CD8-positive, alpha-beta T cell (primary cell): ENCODE measurements at regions of chr19 and their contacts with region 1.

Region 1: GRCh38 chr19:17859533-17860330 is at the start of gene RPL18A:
- DNase-seq: peak; percentile 97 to 100 (median 99)
- ATAC-seq: peak; percentile 96
- H3K4me3 ChIP-seq: peak within 1 kb of the TSS; percentile 82 to 94
- H3K4me3 Mint-ChIP-seq: peak within 1 kb of the TSS; percentile 98
- H3K27ac ChIP-seq: peak within 1 kb of the TSS; percentile 64 to 73
- H3K27ac Mint-ChIP-seq: peak within 1 kb of the TSS; percentile 97
- H3K4me1 ChIP-seq: peaks cover 23% of the 10 kb centered on the region
- H3K4me1 Mint-ChIP-seq: peaks cover 39% of the 10 kb centered on the region
- H3K27me3 ChIP-seq: no peaks in the 10 kb centered on the region
- H3K27me3 Mint-ChIP-seq: no peaks in the 10 kb centered on the region
- CTCF ChIP-seq: peak; percentile 75
- total RNA-seq, gene RPL18A: 3,915 to 3,952 TPM

Region 2: DNA sequence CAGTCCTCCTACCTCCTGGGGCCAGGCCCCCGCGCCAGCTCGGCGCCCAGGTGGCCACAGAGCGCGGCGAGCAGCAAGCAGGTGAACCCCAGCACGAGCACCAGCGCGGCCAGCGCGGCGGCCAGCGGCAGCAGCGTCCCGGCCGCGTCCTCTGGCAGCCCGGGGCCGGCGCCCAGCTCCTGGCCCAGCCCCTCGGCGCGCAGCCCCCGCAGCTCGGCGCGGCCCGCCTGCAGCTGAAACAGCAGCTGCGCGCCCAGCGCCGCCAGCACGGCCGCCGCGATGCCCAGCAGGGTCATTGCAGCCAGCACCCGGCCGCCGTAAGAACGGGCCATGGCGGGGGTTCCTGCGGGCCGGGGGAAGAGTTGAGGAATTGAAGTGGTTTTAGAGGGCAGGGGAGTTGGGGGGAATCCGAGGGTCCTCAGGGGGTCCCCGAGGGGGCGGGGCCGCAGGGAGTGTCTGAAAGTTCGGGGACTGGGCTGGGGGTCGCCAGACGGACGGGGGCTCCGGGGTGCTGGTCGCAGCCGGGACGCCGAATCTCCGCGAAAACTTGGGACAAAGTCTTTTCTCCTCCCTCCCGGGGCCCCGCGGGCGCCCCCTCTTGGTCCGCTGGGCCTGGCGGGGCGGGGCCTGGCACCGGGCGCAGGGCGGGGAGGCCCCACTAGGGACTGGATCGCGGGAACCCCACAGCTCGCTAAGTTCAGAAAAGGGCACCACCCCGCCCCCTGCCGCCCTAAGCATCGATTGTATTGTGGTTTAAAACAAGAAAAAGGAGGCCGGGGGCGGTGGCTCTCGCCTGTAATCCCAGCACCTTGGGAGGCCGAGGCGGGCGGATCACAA is 411.4 kb before region 1 on chr19 and contains the start of gene TMEM221:
- CTCF ChIA-PET with region 1: no interaction called
- POLR2A ChIA-PET with region 1: no interaction called
- intact Hi-C with region 1: loop called in 1 of 2 experiments (anchors 2 kb)
- DNase-seq: peak; percentile 16 to 76 (median 59)
- ATAC-seq: peak; percentile 81
- H3K4me3 ChIP-seq: peak within 1 kb of the TSS in 1 of 2 experiments; percentile 15
- H3K4me3 Mint-ChIP-seq: peak within 1 kb of the TSS; percentile 53
- H3K27ac ChIP-seq: no peak within 1 kb of the TSS
- H3K27ac Mint-ChIP-seq: no peak within 1 kb of the TSS
- H3K4me1 ChIP-seq: no peaks in the 10 kb centered on the region
- H3K4me1 Mint-ChIP-seq: peaks cover 11% of the 10 kb centered on the region
- H3K27me3 ChIP-seq: peaks cover 3 to 20% of the 10 kb centered on the region in 2 experiments
- H3K27me3 Mint-ChIP-seq: peaks cover 17% of the 10 kb centered on the region
- CTCF ChIP-seq: peak; percentile 61
- total RNA-seq, gene TMEM221: not detected

Region 3: GRCh38 chr19:17703824-17704463 is 155.8 kb before region 1 on chr19:
- CTCF ChIA-PET with region 1: interaction called, 107 read pairs
- POLR2A ChIA-PET with region 1: interaction called, 8 read pairs
- intact Hi-C with region 1: loop called (anchors 1 kb)
- DNase-seq: peak; percentile 52 to 83 (median 73)
- ATAC-seq: peak; percentile 99
- H3K4me3 ChIP-seq: no peak overlapping the region
- H3K4me3 Mint-ChIP-seq: no peak overlapping the region
- H3K27ac ChIP-seq: no peak overlapping the region
- H3K27ac Mint-ChIP-seq: no peak overlapping the region
- H3K4me1 ChIP-seq: no peaks in the 10 kb centered on the region
- H3K4me1 Mint-ChIP-seq: no peaks in the 10 kb centered on the region
- H3K27me3 ChIP-seq: no peaks in the 10 kb centered on the region
- H3K27me3 Mint-ChIP-seq: peaks cover 9% of the 10 kb centered on the region
- CTCF ChIP-seq: peak; percentile 89

Region 4: GRCh38 chr19:17847538-17848366 is 12.0 kb before region 1 on chr19 and contains the start of gene JAK3:
- CTCF ChIA-PET with region 1: interaction called, 19 read pairs
- POLR2A ChIA-PET with region 1: interaction called, 21 read pairs
- intact Hi-C with region 1: loop called in 1 of 2 experiments (anchors 1 kb)
- DNase-seq: peak; percentile 57 to 95 (median 86)
- ATAC-seq: peak; percentile 82
- H3K4me3 ChIP-seq: peak within 1 kb of the TSS; percentile 66
- H3K4me3 Mint-ChIP-seq: peak within 1 kb of the TSS; percentile 92
- H3K27ac ChIP-seq: peak within 1 kb of the TSS; percentile 84 to 85
- H3K27ac Mint-ChIP-seq: peak within 1 kb of the TSS; percentile 95
- H3K4me1 ChIP-seq: peaks cover 71% of the 10 kb centered on the region
- H3K4me1 Mint-ChIP-seq: peaks cover 69% of the 10 kb centered on the region
- H3K27me3 ChIP-seq: no peaks in the 10 kb centered on the region
- H3K27me3 Mint-ChIP-seq: no peaks in the 10 kb centered on the region
- CTCF ChIP-seq: no peak
- total RNA-seq, gene JAK3: 113 to 119 TPM

Region 5: DNA sequence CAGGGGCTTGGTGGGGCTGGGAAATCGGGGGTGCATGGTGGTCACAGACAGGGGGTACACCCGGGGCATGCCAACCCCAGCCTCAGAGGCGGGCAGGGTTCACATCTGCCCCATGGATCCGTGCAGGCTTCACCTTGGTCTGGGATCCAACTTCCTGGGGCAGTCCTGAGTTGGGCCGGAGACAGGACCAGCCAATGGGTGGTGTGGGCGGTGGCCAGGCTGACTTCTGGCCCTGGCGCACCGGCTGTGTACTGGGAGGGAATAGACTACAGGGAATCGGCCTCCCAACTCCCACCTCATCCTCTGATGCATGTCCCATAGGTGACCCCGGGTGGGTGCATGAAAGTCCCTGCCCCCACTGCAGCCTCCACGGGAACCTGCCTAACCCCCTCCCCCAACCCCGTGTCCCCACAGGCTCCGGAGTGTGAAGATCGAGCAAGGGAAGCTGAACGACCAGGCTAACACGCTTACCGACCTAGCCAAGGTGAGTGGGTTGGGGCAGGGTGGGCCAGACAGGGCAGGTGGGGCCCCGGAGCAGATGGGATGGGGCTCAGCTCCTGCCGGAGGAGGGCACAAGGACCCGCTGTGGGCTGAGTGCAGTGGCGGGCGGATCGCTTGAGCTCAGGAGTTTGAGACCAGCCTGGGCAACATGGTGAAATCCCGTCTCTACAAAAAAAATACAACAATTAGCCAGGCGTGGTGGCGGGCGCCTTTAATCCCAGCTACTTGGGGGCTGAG is 133.5 kb after region 1 on chr19:
- CTCF ChIA-PET with region 1: interaction called, 16 read pairs
- POLR2A ChIA-PET with region 1: interaction called, 4 read pairs
- intact Hi-C with region 1: loop called (anchors 1 kb)
- DNase-seq: no peak
- ATAC-seq: no peak
- H3K4me3 ChIP-seq: no peak overlapping the region
- H3K4me3 Mint-ChIP-seq: no peak overlapping the region
- H3K27ac ChIP-seq: no peak overlapping the region
- H3K27ac Mint-ChIP-seq: no peak overlapping the region
- H3K4me1 ChIP-seq: peaks cover 7% of the 10 kb centered on the region
- H3K4me1 Mint-ChIP-seq: peaks cover 6% of the 10 kb centered on the region
- H3K27me3 ChIP-seq: no peaks in the 10 kb centered on the region
- H3K27me3 Mint-ChIP-seq: no peaks in the 10 kb centered on the region
- CTCF ChIP-seq: no peak

Region 6: GRCh38 chr19:18117692-18118378 is 258.1 kb after region 1 on chr19:
- CTCF ChIA-PET with region 1: no interaction called
- POLR2A ChIA-PET with region 1: no interaction called
- intact Hi-C with region 1: loop called in 1 of 2 experiments (anchors 5 kb)
- DNase-seq: peak; percentile 91 to 99 (median 96)
- ATAC-seq: peak; percentile 80
- H3K4me3 ChIP-seq: peak overlapping the region; percentile 58 to 85
- H3K4me3 Mint-ChIP-seq: peak overlapping the region; percentile 88
- H3K27ac ChIP-seq: peak overlapping the region; percentile 66 to 70
- H3K27ac Mint-ChIP-seq: peak overlapping the region; percentile 96
- H3K4me1 ChIP-seq: peaks cover 32% of the 10 kb centered on the region
- H3K4me1 Mint-ChIP-seq: peaks cover 38% of the 10 kb centered on the region
- H3K27me3 ChIP-seq: no peaks in the 10 kb centered on the region
- H3K27me3 Mint-ChIP-seq: no peaks in the 10 kb centered on the region
- CTCF ChIP-seq: no peak